ENCODE measurements at regions of chr1 and their contacts with region 1.

Region 1: GRCh38 chr1:167173516-167174184 is 47.0 kb upstream of the POU2F1 start:
- DNase-seq: no peak
- H3K4me3 ChIP-seq: no peak overlapping the region
- H3K27ac ChIP-seq: no peak overlapping the region
- H3K4me1 ChIP-seq: no peaks in the 10 kb centered on the region
- H3K27me3 ChIP-seq: no peaks in the 10 kb centered on the region
- CTCF ChIP-seq: no peak
- EP300 ChIP-seq: no peak
- POLR2A ChIP-seq: no peak

Region 2: GRCh38 chr1:167158095-167158812 is 15.4 kb before region 1 on chr1:
- intact Hi-C with region 1: loop called in 1 of 4 experiments (anchors 1 kb)
- DNase-seq: no peak
- H3K4me3 ChIP-seq: no peak overlapping the region
- H3K27ac ChIP-seq: no peak overlapping the region
- H3K4me1 ChIP-seq: no peaks in the 10 kb centered on the region
- H3K27me3 ChIP-seq: no peaks in the 10 kb centered on the region
- CTCF ChIP-seq: no peak
- EP300 ChIP-seq: no peak
- POLR2A ChIP-seq: no peak